Aorta (tissue), 5 donors: ENCODE measurements at regions of chr1 and their contacts with region 1.

Region 1: DNA sequence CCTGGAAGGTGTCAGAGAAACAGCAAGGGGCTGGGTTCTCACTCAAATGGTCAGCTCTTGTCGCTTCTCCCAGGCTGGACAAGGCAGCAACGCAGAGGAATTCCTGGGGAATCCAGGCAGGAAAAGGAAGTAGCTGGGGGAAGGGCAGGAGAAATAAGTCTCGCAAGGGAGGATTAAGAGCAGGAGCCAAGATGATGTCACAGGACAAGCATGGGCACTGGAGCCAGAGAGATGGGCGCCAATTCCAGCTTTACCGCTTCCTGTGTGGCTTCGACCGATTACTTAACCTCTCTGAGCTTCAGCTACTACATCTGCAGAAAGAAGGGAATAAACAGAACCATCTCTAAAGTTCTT is 70.5 kb downstream of the SSBP3 start:
- DNase-seq: peak; percentile 81 to 85
- ATAC-seq: peak; percentile 77
- H3K4me3 ChIP-seq: no peak overlapping the region
- H3K27ac ChIP-seq: peak overlapping the region; percentile 7 to 76
- H3K4me1 ChIP-seq: no peaks in the 10 kb centered on the region
- H3K27me3 ChIP-seq: no peaks in the 10 kb centered on the region

Region 2: GRCh38 chr1:54287176-54287650 is 48.5 kb before region 1 on chr1:
- intact Hi-C with region 1: loop called (anchors 2 to 5 kb)
- DNase-seq: peak; percentile 90 to 93
- ATAC-seq: peak; percentile 88
- H3K4me3 ChIP-seq: no peak overlapping the region
- H3K27ac ChIP-seq: peak overlapping the region; percentile 29 to 92
- H3K4me1 ChIP-seq: peaks cover 10 to 15% of the 10 kb centered on the region in 2 donors
- H3K27me3 ChIP-seq: no peaks in the 10 kb centered on the region